ENCODE measurements at regions of chr18 and their contacts with region 1.

Region 1: GRCh38 chr18:76803814-76804213 is 18.5 kb upstream of the ZNF236 start:
- DNase-seq: peak; percentile 59 to 69 (median 66)
- H3K4me3 ChIP-seq: no peak overlapping the region
- H3K4me3 Mint-ChIP-seq: peak overlapping the region in 6 of 8 donors; percentile 23 to 68 (median 62)
- H3K27ac ChIP-seq: no peak overlapping the region
- H3K27ac Mint-ChIP-seq: peak overlapping the region in 2 of 7 donors; percentile 58 to 75
- H3K4me1 ChIP-seq: peaks cover 16% of the 10 kb centered on the region
- H3K4me1 Mint-ChIP-seq: peaks cover 7 to 22% (median 10%) of the 10 kb centered on the region in 4 donors
- H3K27me3 ChIP-seq: peaks cover 6% of the 10 kb centered on the region
- H3K27me3 Mint-ChIP-seq: peaks cover 0 to 9% of the 10 kb centered on the region in 2 donors

Region 2: DNA sequence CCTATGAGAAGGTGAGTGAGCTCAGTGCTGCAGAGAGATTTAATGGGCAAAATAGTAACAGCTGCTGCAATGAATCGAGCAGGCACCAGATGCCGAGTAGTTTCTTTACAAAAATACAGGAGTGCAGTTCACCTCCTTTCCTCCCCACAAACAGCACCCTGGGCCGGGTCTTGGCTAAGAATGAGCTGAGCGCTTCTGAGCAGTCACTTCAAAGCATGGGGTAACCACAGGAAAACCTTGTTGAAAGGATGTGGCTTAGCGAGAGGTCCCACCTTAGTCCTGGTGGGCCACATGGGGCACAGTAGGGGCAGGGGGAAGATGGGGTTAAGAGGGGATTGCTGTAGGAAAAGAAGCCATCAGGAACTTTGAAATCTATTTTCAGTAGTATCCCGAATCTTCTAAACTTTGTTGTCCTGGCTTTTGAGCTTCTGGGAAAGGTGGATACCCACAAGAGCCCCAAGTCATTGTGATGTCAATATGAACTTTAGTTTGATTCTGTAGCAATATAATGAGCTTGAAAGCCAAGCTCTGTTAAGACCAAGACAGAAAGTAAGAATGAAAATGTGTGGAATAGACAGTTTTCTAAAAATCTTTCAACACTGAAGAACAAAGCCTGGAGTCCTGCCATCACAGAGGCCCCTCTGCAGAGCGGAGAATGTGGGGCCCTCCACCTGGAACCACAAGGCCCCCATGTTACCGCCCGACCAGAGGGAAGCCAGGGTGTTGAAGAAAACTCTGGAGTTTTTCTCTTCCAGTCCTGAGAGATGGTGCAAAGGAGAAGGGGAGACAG is 82.4 kb before region 1 on chr18:
- CTCF ChIA-PET with region 1: interaction called, 10 read pairs
- POLR2A ChIA-PET with region 1: no interaction called
- intact Hi-C with region 1: no loop called
- DNase-seq: peak; percentile 73 to 83 (median 80)
- H3K4me3 ChIP-seq: peak overlapping the region in 1 of 2 donors; percentile 27
- H3K4me3 Mint-ChIP-seq: peak overlapping the region; percentile 43 to 86 (median 76)
- H3K27ac ChIP-seq: no peak overlapping the region
- H3K27ac Mint-ChIP-seq: peak overlapping the region; percentile 67 to 88 (median 82)
- H3K4me1 ChIP-seq: peaks cover 53% of the 10 kb centered on the region
- H3K4me1 Mint-ChIP-seq: peaks cover 33 to 63% (median 48%) of the 10 kb centered on the region in 4 donors
- H3K27me3 ChIP-seq: no peaks in the 10 kb centered on the region
- H3K27me3 Mint-ChIP-seq: no peaks in the 10 kb centered on the region

Region 3: GRCh38 chr18:76822510-76823160 is 18.8 kb after region 1 on chr18 and contains the start of gene ZNF236:
- CTCF ChIA-PET with region 1: interaction called, 89 read pairs
- POLR2A ChIA-PET with region 1: interaction called, 5 read pairs
- intact Hi-C with region 1: loop called (anchors 1 kb)
- DNase-seq: peak; percentile 61 to 74 (median 70)
- H3K4me3 ChIP-seq: peak within 1 kb of the TSS; percentile 93 to 98
- H3K4me3 Mint-ChIP-seq: peak within 1 kb of the TSS; percentile 91 to 97 (median 95)
- H3K27ac ChIP-seq: peak within 1 kb of the TSS; percentile 88
- H3K27ac Mint-ChIP-seq: peak within 1 kb of the TSS; percentile 92 to 97 (median 97)
- H3K4me1 ChIP-seq: peaks cover 47% of the 10 kb centered on the region
- H3K4me1 Mint-ChIP-seq: peaks cover 33 to 69% (median 54%) of the 10 kb centered on the region in 4 donors
- H3K27me3 ChIP-seq: no peaks in the 10 kb centered on the region
- H3K27me3 Mint-ChIP-seq: no peaks in the 10 kb centered on the region
- total RNA-seq, gene ZNF236: 28.3 to 29.1 TPM

Region 4: GRCh38 chr18:76875390-76876325 is 71.8 kb after region 1 on chr18:
- CTCF ChIA-PET with region 1: interaction called, 15 read pairs
- POLR2A ChIA-PET with region 1: no interaction called
- intact Hi-C with region 1: loop called (anchors 1 kb)
- DNase-seq: peak; percentile 34 to 47 (median 38)
- H3K4me3 ChIP-seq: no peak overlapping the region
- H3K4me3 Mint-ChIP-seq: peak overlapping the region in 2 of 8 donors; percentile 44 to 73
- H3K27ac ChIP-seq: no peak overlapping the region
- H3K27ac Mint-ChIP-seq: peak overlapping the region; percentile 14 to 88 (median 67)
- H3K4me1 ChIP-seq: no peaks in the 10 kb centered on the region
- H3K4me1 Mint-ChIP-seq: peaks cover 7 to 18% (median 11%) of the 10 kb centered on the region in 4 donors
- H3K27me3 ChIP-seq: no peaks in the 10 kb centered on the region
- H3K27me3 Mint-ChIP-seq: no peaks in the 10 kb centered on the region

Region 5: DNA sequence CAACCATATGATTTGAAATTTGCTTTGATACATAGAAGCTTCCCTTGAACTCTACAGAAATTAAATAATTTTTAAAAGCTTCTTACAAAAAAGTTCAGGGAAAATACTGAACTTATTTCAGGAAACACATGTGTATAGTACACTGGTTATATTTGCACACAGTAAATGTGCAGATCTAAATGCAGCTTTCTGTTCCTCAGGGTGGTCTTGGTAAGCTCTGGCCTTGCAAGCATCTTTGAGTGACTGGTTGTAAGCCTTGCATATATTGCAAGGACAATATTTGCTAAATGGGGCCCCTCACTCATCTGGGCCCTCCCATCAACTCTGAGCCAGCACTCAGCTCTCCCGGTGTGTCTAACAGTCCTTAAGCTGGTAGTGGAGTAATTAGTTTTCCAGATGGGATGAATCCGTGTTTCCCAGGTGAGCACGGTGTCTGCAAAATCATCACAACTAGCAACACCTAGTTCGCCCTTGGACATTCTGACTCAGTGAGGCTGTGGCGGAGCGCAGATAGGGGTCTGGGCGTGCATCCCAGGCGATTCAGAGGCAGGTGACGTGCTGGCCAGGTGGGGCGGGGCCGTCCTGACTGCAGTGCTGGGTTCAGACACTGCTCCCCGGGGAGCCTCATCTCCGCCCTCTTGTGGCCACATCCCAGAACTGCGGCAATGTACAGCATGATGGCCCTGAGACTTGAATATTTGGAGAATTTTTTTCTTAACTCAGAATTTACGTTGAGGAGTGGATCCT is 179.2 kb after region 1 on chr18:
- CTCF ChIA-PET with region 1: interaction called, 113 read pairs
- POLR2A ChIA-PET with region 1: interaction called, 3 read pairs
- intact Hi-C with region 1: no loop called
- DNase-seq: peak; percentile 77 to 84 (median 79)
- H3K4me3 ChIP-seq: peak overlapping the region in 1 of 2 donors; percentile 14
- H3K4me3 Mint-ChIP-seq: peak overlapping the region in 3 of 8 donors; percentile 14 to 34 (median 15)
- H3K27ac ChIP-seq: no peak overlapping the region
- H3K27ac Mint-ChIP-seq: peak overlapping the region in 4 of 7 donors; percentile 7 to 76 (median 21)
- H3K4me1 ChIP-seq: peaks cover 6% of the 10 kb centered on the region
- H3K4me1 Mint-ChIP-seq: peaks cover 4 to 9% (median 6%) of the 10 kb centered on the region in 4 donors
- H3K27me3 ChIP-seq: no peaks in the 10 kb centered on the region
- H3K27me3 Mint-ChIP-seq: no peaks in the 10 kb centered on the region

Region 6: DNA sequence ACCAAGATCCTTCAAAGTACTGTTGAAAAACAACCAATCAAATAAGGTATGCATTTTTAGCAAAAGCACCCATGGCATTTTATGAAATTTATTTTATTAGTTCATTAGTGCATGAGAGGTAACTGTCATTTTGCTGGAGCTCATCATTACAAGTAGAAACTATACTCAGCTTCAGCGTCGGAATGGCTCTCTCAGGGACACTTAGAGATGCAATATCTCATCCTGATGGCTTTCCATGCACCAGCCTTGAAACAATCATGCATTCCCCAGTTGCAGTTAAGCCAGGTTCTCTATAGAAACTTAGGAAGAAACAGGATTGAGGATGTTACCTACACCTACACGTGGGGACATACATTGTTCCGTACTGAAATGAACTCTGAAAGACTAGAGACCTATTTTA is 665.3 kb after region 1 on chr18:
- CTCF ChIA-PET with region 1: interaction called, 7 read pairs
- POLR2A ChIA-PET with region 1: no interaction called
- intact Hi-C with region 1: loop called (anchors 2 kb)
- DNase-seq: no peak
- H3K4me3 ChIP-seq: no peak overlapping the region
- H3K4me3 Mint-ChIP-seq: no peak overlapping the region
- H3K27ac ChIP-seq: no peak overlapping the region
- H3K27ac Mint-ChIP-seq: no peak overlapping the region
- H3K4me1 ChIP-seq: no peaks in the 10 kb centered on the region
- H3K4me1 Mint-ChIP-seq: no peaks in the 10 kb centered on the region
- H3K27me3 ChIP-seq: no peaks in the 10 kb centered on the region
- H3K27me3 Mint-ChIP-seq: peaks cover 14 to 34% of the 10 kb centered on the region in 2 donors